ENCODE measurements at regions of chr12 and their contacts with region 1.

Region 1: DNA sequence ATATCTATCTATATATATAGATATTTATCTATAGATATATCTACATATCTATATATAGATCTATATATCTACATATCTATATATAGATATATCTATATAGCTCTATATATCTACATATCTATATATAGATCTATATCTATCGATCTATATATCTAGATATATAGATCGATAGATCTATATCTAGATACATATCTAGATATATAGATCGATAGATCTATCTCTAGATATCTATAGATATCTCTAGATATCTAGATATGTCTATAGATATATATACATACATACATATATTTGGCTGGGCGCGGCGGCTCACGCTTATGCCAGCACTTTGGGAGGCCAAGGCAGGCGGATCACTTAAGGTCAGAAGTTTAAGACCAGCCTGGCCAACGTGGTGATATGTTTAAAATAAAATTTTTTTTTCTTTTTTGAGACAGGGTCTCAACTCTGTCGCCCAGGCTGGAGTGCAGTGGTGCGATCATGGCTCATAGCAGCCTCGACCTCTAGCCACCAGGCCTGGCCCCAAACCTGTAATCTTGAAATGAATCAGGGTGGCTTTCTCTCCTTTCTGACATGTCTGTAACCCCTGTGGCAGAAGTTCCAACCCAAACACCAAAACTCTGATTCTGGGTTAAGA is 18.1 kb downstream of the ARPC3 start:
- H3K4me3 ChIP-seq: no peak overlapping the region
- H3K27ac ChIP-seq: no peak overlapping the region
- H3K4me1 ChIP-seq: no peaks in the 10 kb centered on the region
- CTCF ChIP-seq: no peak

Region 2: GRCh38 chr12:109988903-109989302 is 443.2 kb before region 1 on chr12:
- CTCF ChIA-PET with region 1: no interaction called
- POLR2A ChIA-PET with region 1: interaction called, 10 read pairs
- H3K4me3 ChIP-seq: no peak overlapping the region
- H3K27ac ChIP-seq: no peak overlapping the region
- H3K4me1 ChIP-seq: no peaks in the 10 kb centered on the region
- CTCF ChIP-seq: no peak

Region 3: DNA sequence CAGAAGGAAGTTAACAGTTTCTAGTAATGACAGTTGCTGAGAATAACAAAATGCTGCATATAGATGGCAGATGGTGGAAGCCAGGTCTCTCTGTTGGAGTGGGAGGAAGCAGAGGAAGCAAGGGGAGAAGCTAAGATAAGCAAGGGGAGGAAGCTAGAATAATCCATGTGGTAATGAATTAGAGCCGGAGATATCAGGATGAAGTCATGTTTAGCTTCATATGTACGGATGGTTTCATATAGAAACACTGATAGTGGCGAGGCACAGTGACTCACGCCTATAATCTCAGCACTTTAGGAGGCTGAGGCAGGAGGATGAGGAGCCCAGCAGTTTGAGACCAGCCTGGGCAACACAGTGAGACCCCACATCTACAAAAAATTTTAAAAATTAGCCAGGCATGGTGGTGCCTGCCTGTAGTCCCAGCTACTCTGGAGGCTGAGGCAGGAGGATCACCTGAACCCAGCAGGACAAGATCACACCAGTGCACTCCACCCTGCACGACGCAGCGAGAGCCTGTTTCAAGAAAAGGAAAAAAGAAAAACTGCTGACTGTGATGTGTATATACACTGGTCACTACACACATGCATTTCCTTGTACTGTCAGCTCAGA is 77.8 kb before region 1 on chr12:
- CTCF ChIA-PET with region 1: interaction called, 11 read pairs
- POLR2A ChIA-PET with region 1: interaction called, 5 read pairs
- H3K4me3 ChIP-seq: no peak overlapping the region
- H3K27ac ChIP-seq: no peak overlapping the region
- H3K4me1 ChIP-seq: no peaks in the 10 kb centered on the region
- CTCF ChIP-seq: no peak

Region 4: GRCh38 chr12:110421159-110421661 is 10.9 kb before region 1 on chr12:
- CTCF ChIA-PET with region 1: interaction called, 28 read pairs
- POLR2A ChIA-PET with region 1: interaction called, 5 read pairs
- H3K4me3 ChIP-seq: no peak overlapping the region
- H3K27ac ChIP-seq: no peak overlapping the region
- H3K4me1 ChIP-seq: no peaks in the 10 kb centered on the region
- CTCF ChIP-seq: no peak

Region 5: GRCh38 chr12:110600254-110600653 is 168.2 kb after region 1 on chr12:
- CTCF ChIA-PET with region 1: interaction called, 12 read pairs
- POLR2A ChIA-PET with region 1: no interaction called
- H3K4me3 ChIP-seq: no peak overlapping the region
- H3K27ac ChIP-seq: no peak overlapping the region
- H3K4me1 ChIP-seq: no peaks in the 10 kb centered on the region
- CTCF ChIP-seq: no peak